SK-N-SH (cell line): ENCODE measurements at regions of chr6 and their contacts with region 1.

Region 1: DNA sequence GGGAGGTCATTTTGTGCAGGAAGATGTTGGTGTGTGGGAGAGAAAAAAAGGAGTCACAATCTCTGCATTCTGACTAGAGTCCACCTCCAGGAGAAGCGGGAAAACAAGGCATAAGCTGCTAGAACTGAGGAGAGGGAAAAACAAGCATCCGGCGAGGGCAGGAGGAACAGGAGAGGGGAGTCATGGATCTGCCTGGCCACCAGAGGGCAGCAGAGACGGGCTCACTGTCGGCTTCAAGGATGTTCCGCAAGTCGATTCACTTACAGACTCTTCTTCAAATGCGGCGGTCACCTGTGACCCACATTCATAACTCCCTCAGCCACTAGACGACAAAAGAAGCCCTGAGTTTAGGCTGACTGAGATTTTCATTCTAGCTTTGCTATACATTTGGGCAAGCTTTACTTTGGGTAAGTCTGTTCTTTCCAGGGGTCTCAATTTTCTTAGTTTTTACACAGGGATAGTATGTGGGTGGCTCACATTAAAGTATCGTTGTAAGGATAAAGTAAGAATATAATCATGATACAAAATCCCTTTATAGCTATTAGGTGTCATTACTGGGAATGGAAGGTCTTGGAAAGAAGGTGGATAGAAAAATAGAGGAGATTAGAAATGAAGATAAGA is 6.6 kb upstream of the BTNL2 start:
- DNase-seq: peak; percentile 63
- H3K4me3 ChIP-seq: 0 out of 4 replicates have a peak overlapping the region, but pooled peaks of 1 of the 2 experiments have one; percentile 9
- H3K27ac ChIP-seq: no peak overlapping the region
- H3K4me1 ChIP-seq: no peaks in the 10 kb centered on the region
- H3K27me3 ChIP-seq: peaks cover 46% of the 10 kb centered on the region
- CTCF ChIP-seq: peak; percentile 91
- EP300 ChIP-seq: no peak
- RAD21 ChIP-seq: peak; percentile 72

Region 2: DNA sequence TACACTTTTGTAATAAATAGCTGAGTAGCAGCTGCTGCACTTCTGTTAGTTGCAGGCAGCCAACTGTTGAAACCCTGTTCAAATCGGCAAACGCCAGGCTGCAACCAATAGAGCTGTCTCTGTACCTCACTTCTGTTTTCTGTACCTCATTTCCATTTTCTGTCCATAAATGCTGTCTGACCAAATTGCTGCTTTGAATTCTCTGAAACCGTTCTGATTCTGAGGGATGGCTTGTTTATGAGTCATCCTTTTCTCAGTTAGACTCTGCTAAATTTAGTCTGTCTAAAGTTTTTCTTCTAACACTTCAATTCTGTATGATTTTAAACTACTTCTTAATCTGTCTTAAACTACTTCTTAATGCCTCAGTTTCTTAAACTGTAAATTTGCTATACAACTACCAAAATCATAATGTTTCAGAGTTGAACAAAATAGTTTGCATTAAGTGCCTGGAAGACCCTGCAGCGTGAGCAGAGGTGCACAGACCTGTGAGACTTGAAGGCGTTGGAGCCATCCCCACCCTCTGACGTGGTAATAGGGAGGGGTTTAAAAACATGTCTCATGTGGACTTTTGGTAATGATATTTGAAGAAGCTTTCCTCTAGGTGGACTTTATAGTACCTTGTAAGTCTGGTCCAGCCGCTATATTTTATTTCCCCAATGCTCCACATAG is 16.2 kb before region 1 on chr6:
- CTCF ChIA-PET with region 1: interaction called, 34 read pairs
- POLR2A ChIA-PET with region 1: no interaction called
- DNase-seq: no peak
- H3K4me3 ChIP-seq: no peak overlapping the region
- H3K27ac ChIP-seq: no peak overlapping the region
- H3K4me1 ChIP-seq: no peaks in the 10 kb centered on the region
- H3K27me3 ChIP-seq: peaks cover 33% of the 10 kb centered on the region
- CTCF ChIP-seq: no peak
- EP300 ChIP-seq: no peak
- RAD21 ChIP-seq: no peak

Region 3: GRCh38 chr6:32424589-32425300 is 11.2 kb after region 1 on chr6:
- CTCF ChIA-PET with region 1: interaction called, 29 read pairs
- POLR2A ChIA-PET with region 1: no interaction called
- DNase-seq: no peak
- H3K4me3 ChIP-seq: no peak overlapping the region
- H3K27ac ChIP-seq: no peak overlapping the region
- H3K4me1 ChIP-seq: no peaks in the 10 kb centered on the region
- H3K27me3 ChIP-seq: peaks cover 13% of the 10 kb centered on the region
- CTCF ChIP-seq: no peak
- EP300 ChIP-seq: no peak
- RAD21 ChIP-seq: no peak

Region 4: DNA sequence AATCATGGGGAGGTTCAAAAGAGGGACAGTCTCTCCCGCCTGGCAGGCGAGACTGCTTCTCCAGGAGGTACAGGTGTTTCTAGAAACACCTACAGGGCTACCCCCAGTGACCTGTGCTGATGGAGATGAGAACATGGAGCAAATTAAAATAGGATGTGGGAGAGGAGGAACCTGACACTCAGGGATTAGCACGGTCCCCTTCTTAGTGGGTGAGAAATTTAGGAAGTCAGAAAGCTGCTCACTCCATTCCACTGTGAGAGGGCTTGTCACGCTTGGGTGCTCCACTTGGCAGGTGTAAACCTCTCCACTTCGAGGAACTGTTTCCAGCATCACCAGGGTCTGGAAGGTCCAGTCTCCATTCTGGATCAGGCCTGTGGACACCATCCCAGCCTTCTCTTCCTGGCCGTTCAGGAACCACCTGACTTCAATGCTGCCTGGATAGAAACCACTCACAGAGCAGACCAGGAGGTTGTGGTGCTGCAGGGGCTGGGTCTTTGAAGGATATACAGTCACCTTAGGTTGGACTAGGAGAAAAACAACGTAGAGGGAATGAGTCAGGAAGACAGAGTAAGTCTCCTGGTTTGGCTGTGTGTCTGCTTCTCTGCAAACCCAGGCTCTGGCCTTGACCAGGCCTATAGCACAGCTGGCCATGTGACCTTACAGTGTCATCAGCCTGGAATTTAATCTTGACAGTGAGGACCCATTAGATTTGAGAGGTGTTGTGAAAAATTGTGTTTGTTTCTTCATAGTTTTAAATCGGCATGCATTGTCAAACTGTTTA is 168.0 kb after region 1 on chr6:
- CTCF ChIA-PET with region 1: no interaction called
- POLR2A ChIA-PET with region 1: no interaction called
- DNase-seq: no peak
- H3K4me3 ChIP-seq: no peak overlapping the region
- H3K27ac ChIP-seq: no peak overlapping the region
- H3K4me1 ChIP-seq: no peaks in the 10 kb centered on the region
- H3K27me3 ChIP-seq: no peaks in the 10 kb centered on the region
- CTCF ChIP-seq: no peak
- EP300 ChIP-seq: no peak
- RAD21 ChIP-seq: no peak

Region 5: DNA sequence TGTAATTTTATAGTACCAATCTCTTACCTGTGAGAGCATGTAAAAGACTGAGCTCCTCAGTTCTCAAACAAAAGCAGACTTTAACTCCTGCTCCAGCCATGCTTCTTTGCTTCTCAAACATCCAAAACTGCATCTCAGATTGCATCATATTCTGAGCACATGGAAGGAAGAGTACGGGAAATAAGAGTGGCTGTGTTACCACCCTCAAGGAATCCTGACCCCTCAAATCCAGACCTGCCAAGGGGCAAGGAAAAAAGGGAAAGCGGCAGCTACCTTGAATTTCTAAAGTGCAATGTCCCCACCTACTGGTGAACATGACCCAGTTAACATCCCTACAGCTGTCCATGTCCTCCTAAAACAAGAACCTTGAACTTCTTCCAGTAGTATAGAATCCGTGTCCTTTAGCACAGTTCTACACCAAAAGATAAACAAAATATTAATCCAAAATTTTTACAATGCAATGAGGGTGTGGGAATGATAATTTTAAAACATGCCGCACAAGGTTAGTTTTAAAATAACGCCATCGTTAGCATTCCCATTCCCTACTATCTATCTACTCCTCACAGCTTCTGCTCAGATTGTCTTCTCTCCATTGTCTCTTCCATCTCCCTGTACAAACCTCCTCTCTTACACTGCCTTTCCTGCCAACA is 287.0 kb after region 1 on chr6:
- CTCF ChIA-PET with region 1: interaction called, 29 read pairs
- POLR2A ChIA-PET with region 1: no interaction called
- DNase-seq: peak; percentile 52
- H3K4me3 ChIP-seq: no peak overlapping the region
- H3K27ac ChIP-seq: no peak overlapping the region
- H3K4me1 ChIP-seq: no peaks in the 10 kb centered on the region
- H3K27me3 ChIP-seq: no peaks in the 10 kb centered on the region; the same call in none of the 2 replicates
- CTCF ChIP-seq: peak; percentile 73
- EP300 ChIP-seq: no peak
- RAD21 ChIP-seq: peak; percentile 78

Region 6: DNA sequence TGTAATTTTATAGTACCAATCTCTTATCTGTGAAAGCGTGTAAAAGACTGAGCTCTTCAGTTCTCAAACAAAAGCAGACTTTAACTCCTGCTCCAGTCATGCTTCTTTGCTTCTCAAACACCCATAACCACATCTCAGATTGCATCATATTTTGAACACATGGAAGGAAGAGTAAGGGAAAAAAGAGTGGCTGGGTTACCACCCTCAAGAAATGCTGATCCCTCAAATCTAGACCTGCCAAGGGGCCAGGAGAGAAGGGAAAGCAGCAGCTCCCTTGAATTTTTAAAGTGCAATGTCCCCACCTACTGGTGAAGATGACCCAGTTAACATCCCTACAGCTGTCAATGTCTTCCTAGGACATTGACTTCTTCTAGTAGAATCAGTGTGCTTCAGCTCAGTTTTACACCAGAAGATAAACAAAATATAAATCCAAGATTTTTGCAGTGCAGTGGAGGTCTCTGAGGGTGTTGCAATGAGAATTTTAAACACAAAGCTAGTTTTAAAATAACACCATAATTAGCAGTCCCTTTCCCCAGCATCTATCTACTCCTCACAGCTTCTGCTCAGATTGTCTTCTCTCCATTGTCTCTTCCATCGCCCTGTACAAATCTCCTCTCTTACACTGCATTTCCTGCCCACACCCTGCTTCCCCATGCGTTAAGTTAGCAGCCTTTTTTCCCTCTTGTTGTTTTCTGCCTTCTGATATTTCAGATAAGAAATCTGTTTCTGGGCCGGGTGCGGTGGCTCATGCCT is 372.4 kb after region 1 on chr6:
- CTCF ChIA-PET with region 1: interaction called, 40 read pairs
- POLR2A ChIA-PET with region 1: no interaction called
- DNase-seq: peak; percentile 37
- H3K4me3 ChIP-seq: no peak overlapping the region
- H3K27ac ChIP-seq: no peak overlapping the region
- H3K4me1 ChIP-seq: no peaks in the 10 kb centered on the region
- H3K27me3 ChIP-seq: peaks cover 8% of the 10 kb centered on the region; the same call in 1 of the 2 replicates
- CTCF ChIP-seq: peak; percentile 67
- EP300 ChIP-seq: no peak
- RAD21 ChIP-seq: peak; percentile 68